Naive thymus-derived CD4-positive, alpha-beta T cell (primary cell): ENCODE measurements at regions of chr9 and their contacts with region 1.

Region 1: GRCh38 chr9:21995177-21996086 is 841 bp downstream of the CDKN2B-AS1 start:
- DNase-seq: peak; percentile 52 to 74 (median 69)
- ATAC-seq: peak; percentile 88
- H3K4me3 ChIP-seq: peak overlapping the region; percentile 93
- H3K4me3 Mint-ChIP-seq: peak overlapping the region; percentile 88 to 97 (median 94)
- H3K27ac ChIP-seq: peak overlapping the region; percentile 37
- H3K27ac Mint-ChIP-seq: peak overlapping the region; percentile 29 to 98 (median 56)
- H3K4me1 ChIP-seq: peaks cover 8 to 16% of the 10 kb centered on the region in 2 donors
- H3K4me1 Mint-ChIP-seq: peaks cover 0 to 32% (median 13%) of the 10 kb centered on the region in 7 donors
- H3K27me3 ChIP-seq: peaks cover 0 to 18% of the 10 kb centered on the region in 2 donors
- H3K27me3 Mint-ChIP-seq: peaks cover 22 to 54% (median 44%) of the 10 kb centered on the region in 5 donors

Region 2: GRCh38 chr9:21334701-21335632 is 660.5 kb before region 1 on chr9 and contains the start of gene KLHL9:
- CTCF ChIA-PET with region 1: no interaction called
- POLR2A ChIA-PET with region 1: no interaction called
- intact Hi-C with region 1: loop called (anchors 2 to 10 kb)
- DNase-seq: peak; percentile 72 to 87 (median 85)
- ATAC-seq: peak; percentile 94
- H3K4me3 ChIP-seq: peak within 1 kb of the TSS; percentile 96
- H3K4me3 Mint-ChIP-seq: peak within 1 kb of the TSS; percentile 90 to 97 (median 94)
- H3K27ac ChIP-seq: peak within 1 kb of the TSS; percentile 95
- H3K27ac Mint-ChIP-seq: peak within 1 kb of the TSS; percentile 90 to 98 (median 95)
- H3K4me1 ChIP-seq: peaks cover 15 to 35% of the 10 kb centered on the region in 2 donors
- H3K4me1 Mint-ChIP-seq: peaks cover 36 to 65% (median 60%) of the 10 kb centered on the region in 7 donors
- H3K27me3 ChIP-seq: no peaks in the 10 kb centered on the region
- H3K27me3 Mint-ChIP-seq: peaks cover 0 to 27% (median 0%) of the 10 kb centered on the region in 5 donors
- total RNA-seq, gene KLHL9: 11.8 to 37.7 (median 19.1) TPM

Region 3: GRCh38 chr9:21506626-21507484 is 488.6 kb before region 1 on chr9:
- CTCF ChIA-PET with region 1: no interaction called
- POLR2A ChIA-PET with region 1: no interaction called
- intact Hi-C with region 1: no loop called
- DNase-seq: no peak
- ATAC-seq: no peak
- H3K4me3 ChIP-seq: no peak overlapping the region
- H3K4me3 Mint-ChIP-seq: peak overlapping the region in 2 of 10 donors; percentile 4 to 43
- H3K27ac ChIP-seq: no peak overlapping the region
- H3K27ac Mint-ChIP-seq: no peak overlapping the region
- H3K4me1 ChIP-seq: peaks cover 15 to 33% of the 10 kb centered on the region in 2 donors
- H3K4me1 Mint-ChIP-seq: peaks cover 0 to 15% (median 5%) of the 10 kb centered on the region in 7 donors
- H3K27me3 ChIP-seq: no peaks in the 10 kb centered on the region
- H3K27me3 Mint-ChIP-seq: peaks cover 0 to 4% (median 0%) of the 10 kb centered on the region in 5 donors

Region 4: GRCh38 chr9:21802195-21803000 is 193.0 kb before region 1 on chr9 and contains the start of gene MTAP:
- CTCF ChIA-PET with region 1: no interaction called
- POLR2A ChIA-PET with region 1: no interaction called
- intact Hi-C with region 1: loop called in 1 of 2 experiments (anchors 1 kb)
- DNase-seq: peak in 7 of 9 donors; percentile 46 to 81 (median 72)
- ATAC-seq: peak; percentile 88
- H3K4me3 ChIP-seq: peak within 1 kb of the TSS; percentile 92
- H3K4me3 Mint-ChIP-seq: peak within 1 kb of the TSS; percentile 96 to 100 (median 99)
- H3K27ac ChIP-seq: peak within 1 kb of the TSS; percentile 69
- H3K27ac Mint-ChIP-seq: peak within 1 kb of the TSS; percentile 92 to 99 (median 96)
- H3K4me1 ChIP-seq: peaks cover 10 to 25% of the 10 kb centered on the region in 2 donors
- H3K4me1 Mint-ChIP-seq: peaks cover 24 to 52% (median 40%) of the 10 kb centered on the region in 7 donors
- H3K27me3 ChIP-seq: peaks cover 0 to 4% of the 10 kb centered on the region in 2 donors
- H3K27me3 Mint-ChIP-seq: peaks cover 0 to 46% (median 8%) of the 10 kb centered on the region in 5 donors
- total RNA-seq, gene MTAP: 29.0 to 50.7 (median 43.2) TPM

Region 5: GRCh38 chr9:21919377-21920362 is 75.8 kb before region 1 on chr9:
- CTCF ChIA-PET with region 1: no interaction called
- POLR2A ChIA-PET with region 1: no interaction called
- intact Hi-C with region 1: loop called in 1 of 2 experiments (anchors 2 kb)
- DNase-seq: peak in 7 of 9 donors; percentile 39 to 78 (median 60)
- ATAC-seq: peak; percentile 80
- H3K4me3 ChIP-seq: peak overlapping the region; percentile 2
- H3K4me3 Mint-ChIP-seq: peak overlapping the region; percentile 3 to 76 (median 58)
- H3K27ac ChIP-seq: no peak overlapping the region
- H3K27ac Mint-ChIP-seq: peak overlapping the region; percentile 15 to 90 (median 75)
- H3K4me1 ChIP-seq: peaks cover 13 to 14% of the 10 kb centered on the region in 2 donors
- H3K4me1 Mint-ChIP-seq: peaks cover 12 to 41% (median 28%) of the 10 kb centered on the region in 7 donors
- H3K27me3 ChIP-seq: no peaks in the 10 kb centered on the region
- H3K27me3 Mint-ChIP-seq: no peaks in the 10 kb centered on the region

Region 6: GRCh38 chr9:21974548-21975409 is 20.7 kb before region 1 on chr9:
- CTCF ChIA-PET with region 1: no interaction called
- POLR2A ChIA-PET with region 1: interaction called, 3 read pairs
- intact Hi-C with region 1: loop called (anchors 1 kb)
- DNase-seq: peak in 3 of 9 donors; percentile 31 to 46 (median 41)
- ATAC-seq: peak; percentile 68
- H3K4me3 ChIP-seq: peak overlapping the region; percentile 43
- H3K4me3 Mint-ChIP-seq: peak overlapping the region; percentile 74 to 90 (median 82)
- H3K27ac ChIP-seq: no peak overlapping the region
- H3K27ac Mint-ChIP-seq: peak overlapping the region in 3 of 9 donors; percentile 26 to 64 (median 58)
- H3K4me1 ChIP-seq: peaks cover 13 to 17% of the 10 kb centered on the region in 2 donors
- H3K4me1 Mint-ChIP-seq: peaks cover 0 to 31% (median 21%) of the 10 kb centered on the region in 7 donors
- H3K27me3 ChIP-seq: peaks cover 57 to 75% of the 10 kb centered on the region in 2 donors
- H3K27me3 Mint-ChIP-seq: peaks cover 92 to 97% (median 93%) of the 10 kb centered on the region in 5 donors

Region 7: DNA sequence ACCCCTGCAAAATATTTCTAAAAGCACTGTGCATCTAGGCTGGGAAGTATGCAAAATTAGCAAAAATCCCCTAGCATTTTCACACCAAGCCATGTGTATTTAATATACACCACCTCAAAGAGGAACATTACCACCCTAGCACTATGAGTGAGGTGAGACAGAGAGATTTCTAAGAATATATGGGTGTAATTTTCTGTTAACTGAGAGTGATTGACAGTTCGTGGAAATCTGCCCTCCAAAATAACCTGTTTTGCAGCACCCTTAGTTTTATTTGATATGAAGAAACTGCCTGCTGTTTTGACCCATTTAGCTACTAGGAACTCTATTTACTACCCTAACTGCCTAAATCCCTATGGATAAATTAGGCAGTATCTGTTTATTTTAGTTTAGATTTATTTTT is 77.9 kb after region 1 on chr9:
- CTCF ChIA-PET with region 1: no interaction called
- POLR2A ChIA-PET with region 1: no interaction called
- intact Hi-C with region 1: loop called in 1 of 2 experiments (anchors 2 kb)
- DNase-seq: no peak
- ATAC-seq: no peak
- H3K4me3 ChIP-seq: no peak overlapping the region
- H3K4me3 Mint-ChIP-seq: peak overlapping the region in 4 of 10 donors; percentile 15 to 63 (median 38)
- H3K27ac ChIP-seq: no peak overlapping the region
- H3K27ac Mint-ChIP-seq: peak overlapping the region in 3 of 9 donors; percentile 49 to 80 (median 53)
- H3K4me1 ChIP-seq: peaks cover 0 to 26% of the 10 kb centered on the region in 2 donors
- H3K4me1 Mint-ChIP-seq: peaks cover 15 to 57% (median 31%) of the 10 kb centered on the region in 7 donors
- H3K27me3 ChIP-seq: no peaks in the 10 kb centered on the region
- H3K27me3 Mint-ChIP-seq: peaks cover 0 to 44% (median 4%) of the 10 kb centered on the region in 5 donors

Region 8: GRCh38 chr9:22238809-22239684 is 243.6 kb after region 1 on chr9:
- CTCF ChIA-PET with region 1: no interaction called
- POLR2A ChIA-PET with region 1: no interaction called
- intact Hi-C with region 1: loop called in 1 of 2 experiments (anchors 10 kb)
- DNase-seq: peak in 1 of 9 donors; percentile 14
- ATAC-seq: no peak
- H3K4me3 ChIP-seq: no peak overlapping the region
- H3K4me3 Mint-ChIP-seq: peak overlapping the region in 1 of 10 donors; percentile 26
- H3K27ac ChIP-seq: no peak overlapping the region
- H3K27ac Mint-ChIP-seq: no peak overlapping the region
- H3K4me1 ChIP-seq: no peaks in the 10 kb centered on the region
- H3K4me1 Mint-ChIP-seq: peaks cover 0 to 35% (median 21%) of the 10 kb centered on the region in 7 donors
- H3K27me3 ChIP-seq: no peaks in the 10 kb centered on the region
- H3K27me3 Mint-ChIP-seq: peaks cover 0 to 55% (median 0%) of the 10 kb centered on the region in 5 donors